Right cardiac atrium (tissue), 5 donors: ENCODE measurements at regions of chr12 and their contacts with region 1.

Region 1: DNA sequence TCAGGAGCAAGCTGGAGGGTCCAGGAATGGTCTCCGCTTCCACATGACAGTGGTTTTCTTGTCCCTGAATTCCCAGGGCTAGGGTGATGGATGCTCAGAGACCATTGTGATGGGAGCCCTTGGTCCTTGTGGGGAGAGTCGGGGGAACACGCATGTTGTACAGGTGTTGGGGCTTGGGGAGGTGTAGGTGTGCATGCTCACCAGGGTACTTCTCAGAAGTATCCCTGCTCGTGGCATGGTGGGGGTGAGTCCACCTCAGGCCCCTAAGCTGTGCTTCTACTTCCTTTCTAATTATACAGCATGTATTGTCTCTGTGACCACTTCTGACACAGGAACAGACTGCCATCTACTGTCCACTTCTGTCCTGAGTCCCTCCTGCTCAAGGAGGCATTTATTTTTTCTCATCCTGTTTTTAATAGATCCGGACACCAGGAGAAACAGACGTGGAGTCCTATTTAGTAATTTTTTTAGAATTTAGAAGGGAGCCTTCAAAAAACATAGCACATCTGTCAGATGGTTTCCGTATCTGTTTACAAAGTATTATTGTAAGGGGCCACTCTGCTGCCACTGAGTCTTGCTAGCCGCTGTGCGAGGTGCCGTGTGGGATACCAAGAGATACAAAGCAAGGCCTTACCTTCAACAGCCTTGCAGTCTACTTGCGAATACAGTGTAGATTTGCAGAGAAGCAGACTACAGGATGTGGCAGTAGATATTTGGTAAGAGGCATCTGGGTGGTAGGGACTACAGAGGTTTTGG is 10.5 kb downstream of the NTF3 start:
- DNase-seq: no peak
- ATAC-seq: peak; percentile 76 to 78
- H3K4me3 ChIP-seq: no peak overlapping the region
- H3K27ac ChIP-seq: no peak overlapping the region
- H3K4me1 ChIP-seq: no peaks in the 10 kb centered on the region
- H3K27me3 ChIP-seq: no peaks in the 10 kb centered on the region

Region 2: DNA sequence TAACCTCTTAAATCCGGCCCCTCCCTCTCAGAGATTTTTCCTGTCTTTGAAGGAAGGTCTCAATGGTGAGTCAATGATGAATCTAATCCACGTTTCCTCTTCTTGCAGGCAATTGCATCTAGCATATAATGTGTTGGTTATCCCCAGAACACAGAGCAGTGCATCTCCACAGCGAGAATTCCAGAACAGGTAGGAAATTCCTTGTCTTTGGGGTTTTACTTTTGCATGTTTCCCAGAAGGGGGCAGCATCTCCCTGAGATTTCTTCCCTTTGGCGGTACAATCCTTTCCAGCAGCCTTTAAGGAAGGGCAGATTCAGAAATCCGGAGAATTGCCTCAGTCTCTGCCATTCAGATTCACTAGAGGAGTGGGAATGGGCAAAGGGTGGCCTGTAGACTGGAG is 270.7 kb before region 1 on chr12:
- intact Hi-C with region 1: loop called in 1 of 4 experiments (anchors 2 kb)
- DNase-seq: no peak
- ATAC-seq: peak; percentile 21 to 31
- H3K4me3 ChIP-seq: no peak overlapping the region
- H3K27ac ChIP-seq: no peak overlapping the region
- H3K4me1 ChIP-seq: no peaks in the 10 kb centered on the region
- H3K27me3 ChIP-seq: no peaks in the 10 kb centered on the region

Region 3: GRCh38 chr12:5200278-5201087 is 241.9 kb before region 1 on chr12:
- intact Hi-C with region 1: loop called in 3 of 4 experiments (anchors 5 kb)
- DNase-seq: peak; percentile 49 to 87 (median 85)
- ATAC-seq: peak; percentile 75 to 78
- H3K4me3 ChIP-seq: no peak overlapping the region
- H3K27ac ChIP-seq: no peak overlapping the region
- H3K4me1 ChIP-seq: no peaks in the 10 kb centered on the region
- H3K27me3 ChIP-seq: no peaks in the 10 kb centered on the region